MCF 10A (cell line): ENCODE measurements at regions of chr13 and their contacts with region 1.

Region 1: DNA sequence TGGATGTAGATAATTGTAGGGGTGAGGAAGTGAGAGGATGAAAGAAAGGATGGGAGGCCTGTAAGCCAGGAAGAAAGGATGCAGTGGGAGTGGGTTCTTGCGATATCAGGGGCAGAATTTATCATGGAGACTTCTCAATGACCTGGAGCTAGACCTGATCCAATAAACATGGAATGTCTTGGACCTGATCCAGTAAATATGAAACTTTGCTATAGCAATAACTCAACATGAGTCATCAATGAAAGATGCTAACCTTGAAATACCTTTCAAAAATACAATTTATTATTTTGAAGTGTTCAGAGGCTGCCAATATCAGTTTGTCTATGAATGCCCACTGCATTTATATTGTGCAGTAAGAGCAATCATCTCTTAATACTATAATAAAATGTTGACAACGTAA is 279.5 kb downstream of the POU4F1 start:
- DNase-seq: peak; percentile 50
- H3K4me3 Mint-ChIP-seq: no peak overlapping the region
- H3K27ac Mint-ChIP-seq: no peak overlapping the region
- H3K4me1 Mint-ChIP-seq: peaks cover 10% of the 10 kb centered on the region
- H3K27me3 Mint-ChIP-seq: no peaks in the 10 kb centered on the region
- CTCF ChIP-seq: no peak

Region 2: DNA sequence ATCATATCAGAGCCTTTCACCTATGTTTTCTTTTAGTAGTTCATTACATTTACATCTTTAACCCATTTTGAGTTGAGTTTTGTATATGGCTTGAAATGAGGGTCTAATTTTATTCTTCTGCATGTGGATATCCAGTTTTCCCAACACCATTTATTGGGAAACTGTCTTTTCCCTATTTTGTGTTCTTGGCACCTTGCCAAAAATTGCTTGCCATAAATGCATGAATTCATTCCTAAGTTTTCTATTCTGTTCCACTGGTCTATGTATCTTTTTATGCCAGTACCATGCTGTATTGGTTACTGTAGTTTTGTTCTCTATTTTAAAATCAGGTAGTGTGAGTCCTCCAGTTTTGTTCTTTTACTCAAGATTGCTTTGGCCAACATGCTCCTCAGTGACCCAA is 479.1 kb after region 1 on chr13:
- CTCF ChIA-PET with region 1: no interaction called
- POLR2A ChIA-PET with region 1: no interaction called
- intact Hi-C with region 1: no loop called
- DNase-seq: no peak
- H3K4me3 Mint-ChIP-seq: no peak overlapping the region
- H3K27ac Mint-ChIP-seq: no peak overlapping the region
- H3K4me1 Mint-ChIP-seq: no peaks in the 10 kb centered on the region
- H3K27me3 Mint-ChIP-seq: peaks cover 77% of the 10 kb centered on the region
- CTCF ChIP-seq: no peak

Region 3: GRCh38 chr13:79246578-79246949 is 922.7 kb after region 1 on chr13:
- CTCF ChIA-PET with region 1: no interaction called
- POLR2A ChIA-PET with region 1: no interaction called
- intact Hi-C with region 1: loop called (anchors 5 kb)
- DNase-seq: peak; percentile 13
- H3K4me3 Mint-ChIP-seq: no peak overlapping the region
- H3K27ac Mint-ChIP-seq: no peak overlapping the region
- H3K4me1 Mint-ChIP-seq: no peaks in the 10 kb centered on the region
- H3K27me3 Mint-ChIP-seq: peaks cover 14% of the 10 kb centered on the region
- CTCF ChIP-seq: peak; percentile 26